HepG2 (cell line): ENCODE measurements at regions of chr9 and their contacts with region 1.

Region 1: GRCh38 chr9:28774416-28775235 is 1201.3 kb upstream of the C9orf72 start:
- DNase-seq: peak; percentile 18
- ATAC-seq: peak; percentile 43; the same call in 1 of the 3 replicates
- H3K4me3 ChIP-seq: no peak overlapping the region
- H3K27ac ChIP-seq: no peak overlapping the region
- H3K4me1 ChIP-seq: no peaks in the 10 kb centered on the region
- H3K27me3 ChIP-seq: no peaks in the 10 kb centered on the region
- CTCF ChIP-seq: peak; percentile 53
- EP300 ChIP-seq: no peak
- POLR2A ChIP-seq: no peak
- RAD21 ChIP-seq: no peak

Region 2: GRCh38 chr9:29220596-29221251 is 446.1 kb after region 1 on chr9:
- CTCF ChIA-PET with region 1: no interaction called
- POLR2A ChIA-PET with region 1: no interaction called
- in situ Hi-C with region 1: no loop called
- intact Hi-C with region 1: loop called (anchors 5 kb)
- DNase-seq: no peak
- ATAC-seq: no peak
- H3K4me3 ChIP-seq: no peak overlapping the region
- H3K27ac ChIP-seq: no peak overlapping the region
- H3K4me1 ChIP-seq: no peaks in the 10 kb centered on the region
- H3K27me3 ChIP-seq: no peaks in the 10 kb centered on the region
- CTCF ChIP-seq: no peak
- EP300 ChIP-seq: no peak
- POLR2A ChIP-seq: no peak
- RAD21 ChIP-seq: no peak